PC-9 (cell line): ENCODE measurements at regions of chr15 and their contacts with region 1.

Region 1: GRCh38 chr15:98896802-98897732 is 110.5 kb downstream of the PGPEP1L start:
- DNase-seq: peak; percentile 52 to 95
- H3K4me3 ChIP-seq: peak overlapping the region; percentile 10; the same call in 1 of the 2 replicates
- H3K27ac ChIP-seq: peak overlapping the region; percentile 97
- H3K4me1 ChIP-seq: peaks cover 41% of the 10 kb centered on the region
- H3K27me3 ChIP-seq: no peaks in the 10 kb centered on the region
- CTCF ChIP-seq: no peak

Region 2: GRCh38 chr15:98800437-98801233 is 96.4 kb before region 1 on chr15:
- CTCF ChIA-PET with region 1: no interaction called
- POLR2A ChIA-PET with region 1: no interaction called
- intact Hi-C with region 1: loop called (anchors 2 kb)
- DNase-seq: peak; percentile 50 to 81
- H3K4me3 ChIP-seq: peak overlapping the region; percentile 49; the same call in 1 of the 2 replicates
- H3K27ac ChIP-seq: peak overlapping the region; percentile 85
- H3K4me1 ChIP-seq: peaks cover 67% of the 10 kb centered on the region
- H3K27me3 ChIP-seq: no peaks in the 10 kb centered on the region
- CTCF ChIP-seq: no peak

Region 3: GRCh38 chr15:98873441-98874201 is 23.4 kb before region 1 on chr15:
- CTCF ChIA-PET with region 1: no interaction called
- POLR2A ChIA-PET with region 1: interaction called, 3 read pairs
- intact Hi-C with region 1: loop called (anchors 1 kb)
- DNase-seq: peak; percentile 79 to 92
- H3K4me3 ChIP-seq: peak overlapping the region; percentile 44
- H3K27ac ChIP-seq: peak overlapping the region; percentile 95
- H3K4me1 ChIP-seq: peaks cover 80% of the 10 kb centered on the region
- H3K27me3 ChIP-seq: no peaks in the 10 kb centered on the region
- CTCF ChIP-seq: no peak

Region 4: GRCh38 chr15:98954411-98954810 is 57.3 kb after region 1 on chr15:
- CTCF ChIA-PET with region 1: no interaction called
- POLR2A ChIA-PET with region 1: no interaction called
- intact Hi-C with region 1: no loop called
- DNase-seq: no peak
- H3K4me3 ChIP-seq: no peak overlapping the region
- H3K27ac ChIP-seq: no peak overlapping the region
- H3K4me1 ChIP-seq: no peaks in the 10 kb centered on the region
- H3K27me3 ChIP-seq: no peaks in the 10 kb centered on the region
- CTCF ChIP-seq: no peak